Heart right ventricle (tissue), 16 donors: ENCODE measurements at regions of chr10 and their contacts with region 1.

Region 1: GRCh38 chr10:102399217-102400089 is 3.9 kb downstream of the NFKB2 start:
- DNase-seq: peak; percentile 86 to 91
- ATAC-seq: peak; percentile 66 to 83 (median 76)
- H3K4me3 ChIP-seq: peak overlapping the region; percentile 47 to 95 (median 67)
- H3K27ac ChIP-seq: peak overlapping the region; percentile 76 to 95 (median 90)
- H3K4me1 ChIP-seq: peaks cover 7 to 46% (median 30%) of the 10 kb centered on the region in 9 donors
- H3K27me3 ChIP-seq: no peaks in the 10 kb centered on the region
- CTCF ChIP-seq: peak; percentile 93 to 99 (median 95)

Region 2: GRCh38 chr10:102167861-102168260 is 231.6 kb before region 1 on chr10:
- intact Hi-C with region 1: loop called in 3 of 10 experiments (anchors 1 to 5 kb)
- DNase-seq: no peak
- ATAC-seq: no peak
- H3K4me3 ChIP-seq: no peak overlapping the region
- H3K27ac ChIP-seq: no peak overlapping the region
- H3K4me1 ChIP-seq: peaks cover 0 to 12% (median 4%) of the 10 kb centered on the region in 9 donors
- H3K27me3 ChIP-seq: no peaks in the 10 kb centered on the region
- CTCF ChIP-seq: no peak

Region 3: DNA sequence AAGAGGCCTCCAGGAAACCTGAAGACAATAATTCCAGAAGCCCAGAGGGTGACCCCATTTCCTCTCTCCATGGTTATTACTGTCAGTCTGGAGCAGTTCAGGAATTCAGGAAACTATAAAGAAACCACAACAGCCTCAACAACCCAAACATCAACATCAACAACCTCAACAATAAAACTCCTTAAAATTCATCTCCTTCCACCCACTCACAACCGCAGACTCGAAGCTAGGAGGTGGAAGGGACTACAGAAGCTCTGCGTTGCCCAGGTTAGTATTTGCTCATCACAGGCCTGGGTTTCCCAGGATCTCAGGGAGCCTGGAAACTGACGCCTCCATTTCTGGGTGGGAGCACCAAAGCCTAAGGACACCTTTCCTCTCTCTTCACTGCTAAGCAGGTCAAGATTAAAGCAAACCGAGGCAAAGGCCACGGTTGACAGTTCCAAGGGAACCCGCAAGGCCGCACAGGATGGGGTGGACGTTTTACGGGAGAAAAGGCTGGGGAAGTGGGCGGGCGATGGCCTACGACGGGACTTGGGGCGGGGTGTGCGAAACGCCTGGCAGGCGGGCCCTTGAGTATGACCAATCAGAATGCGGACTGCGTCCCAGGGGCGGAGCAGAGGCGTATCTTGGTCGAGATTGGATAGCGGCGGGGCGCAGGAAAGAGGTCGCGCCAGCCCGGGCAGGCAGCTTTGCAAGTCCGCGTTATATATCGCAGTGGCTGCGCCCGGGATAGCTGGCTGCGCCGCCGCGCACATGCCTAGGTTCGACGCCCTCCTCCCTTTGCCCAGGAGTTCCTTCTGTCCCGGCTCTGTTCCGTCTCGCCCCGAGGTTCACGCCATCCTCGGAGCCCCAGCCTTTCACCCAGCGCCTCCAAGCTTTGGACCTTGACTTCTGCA is 173.6 kb before region 1 on chr10 and contains the start of gene ELOVL3:
- intact Hi-C with region 1: loop called in 6 of 10 experiments (anchors 1 to 5 kb)
- DNase-seq: peak; percentile 93 to 96
- ATAC-seq: peak; percentile 93 to 98 (median 98)
- H3K4me3 ChIP-seq: peak within 1 kb of the TSS in 7 of 10 donors; percentile 18 to 49 (median 45)
- H3K27ac ChIP-seq: peak within 1 kb of the TSS; percentile 19 to 89 (median 74)
- H3K4me1 ChIP-seq: peaks cover 6 to 44% (median 23%) of the 10 kb centered on the region in 9 donors
- H3K27me3 ChIP-seq: peaks cover 0 to 27% (median 10%) of the 10 kb centered on the region in 7 donors
- CTCF ChIP-seq: peak in 3 of 9 donors; percentile 1 to 10 (median 5)
- total RNA-seq, gene ELOVL3: 0.22 to 0.45 (median 0.30) TPM in 3 of 10 donors, not detected in the others

Region 4: GRCh38 chr10:102476466-102477141 is 77.2 kb after region 1 on chr10:
- intact Hi-C with region 1: loop called in 6 of 10 experiments (anchors 2 to 10 kb)
- DNase-seq: no peak
- ATAC-seq: no peak
- H3K4me3 ChIP-seq: no peak overlapping the region
- H3K27ac ChIP-seq: no peak overlapping the region
- H3K4me1 ChIP-seq: peaks cover 4 to 16% (median 11%) of the 10 kb centered on the region in 9 donors
- H3K27me3 ChIP-seq: no peaks in the 10 kb centered on the region
- CTCF ChIP-seq: no peak

Region 5: DNA sequence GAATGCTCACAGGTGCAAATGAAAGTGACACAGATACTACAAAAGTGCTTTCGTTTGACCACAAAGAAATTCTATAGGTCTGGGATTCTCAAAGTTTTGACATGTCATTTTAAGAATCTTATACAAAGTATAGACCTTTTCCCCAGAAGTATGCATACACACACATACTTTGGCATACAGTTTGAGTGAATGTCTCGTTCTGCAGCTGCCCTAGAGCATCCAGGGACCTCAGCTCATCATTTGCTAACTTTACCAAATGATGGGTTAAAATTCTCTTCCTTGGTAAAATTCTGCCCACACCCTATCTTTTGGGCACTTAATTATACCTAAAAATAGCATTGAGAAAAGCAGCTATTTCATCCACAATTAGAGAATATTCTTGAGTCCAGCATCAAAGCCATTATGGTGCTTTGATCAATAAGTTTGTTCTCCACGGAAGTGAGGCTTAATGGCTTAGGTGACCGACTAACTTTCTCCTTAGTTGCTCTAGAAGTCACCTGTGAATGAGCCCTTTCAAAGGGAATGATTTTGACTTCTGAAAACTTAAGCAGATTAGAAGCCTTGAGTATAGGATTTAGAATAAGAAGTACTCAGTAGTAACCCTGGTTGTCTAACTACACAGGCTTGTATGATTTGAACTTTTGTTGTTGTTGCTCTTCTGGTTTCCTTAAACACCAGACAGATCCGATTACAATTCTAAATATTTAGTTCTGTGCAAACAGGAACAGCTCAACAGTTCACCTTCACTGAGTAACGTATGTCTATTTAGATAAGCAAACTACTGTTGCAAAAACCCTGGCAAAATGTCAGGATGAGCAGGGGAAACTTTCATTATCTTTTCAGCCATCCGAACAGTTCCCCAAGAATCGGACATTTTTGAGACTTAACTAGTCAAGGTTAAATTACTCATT is 589.2 kb after region 1 on chr10:
- intact Hi-C with region 1: no loop called
- DNase-seq: no peak
- ATAC-seq: no peak
- H3K4me3 ChIP-seq: no peak overlapping the region
- H3K27ac ChIP-seq: no peak overlapping the region
- H3K4me1 ChIP-seq: peaks cover 0 to 8% (median 0%) of the 10 kb centered on the region in 9 donors
- H3K27me3 ChIP-seq: no peaks in the 10 kb centered on the region
- CTCF ChIP-seq: no peak